Left ventricle myocardium inferior (tissue), 1 donor: ENCODE measurements at regions of chrX and their contacts with region 1.

Region 1: DNA sequence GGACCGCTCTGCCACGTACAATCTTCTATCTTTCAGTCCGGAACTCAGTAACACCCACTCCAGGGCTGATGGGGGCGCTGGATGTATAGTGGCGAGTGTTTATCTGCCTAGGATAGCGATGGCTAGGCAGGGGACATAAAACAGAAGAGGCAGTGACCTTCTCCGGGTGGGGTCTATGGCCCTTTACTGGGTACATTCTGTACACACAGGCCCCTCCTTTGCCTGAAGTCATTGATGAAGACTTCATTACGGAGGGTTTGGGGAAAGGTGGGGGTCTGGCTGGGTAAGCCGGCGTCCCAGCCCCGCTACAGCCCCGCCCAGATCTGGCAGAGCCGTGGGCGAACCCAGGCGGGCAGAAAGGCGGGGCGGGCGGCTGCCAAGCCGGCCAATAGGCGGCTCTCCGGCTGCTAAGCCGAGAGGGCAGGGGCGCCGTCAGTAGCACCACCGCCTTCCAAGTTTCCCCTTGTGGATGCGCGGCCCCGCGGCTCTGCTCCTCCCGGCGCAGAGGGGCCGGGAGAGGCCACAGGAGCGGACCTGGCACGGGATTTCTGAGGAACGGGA is at the start of gene CHST7:
- DNase-seq: peak; percentile 81
- H3K4me3 ChIP-seq: peak within 1 kb of the TSS; percentile 82
- H3K27ac ChIP-seq: peak within 1 kb of the TSS; percentile 93
- H3K4me1 ChIP-seq: peaks cover 25% of the 10 kb centered on the region
- H3K27me3 ChIP-seq: no peaks in the 10 kb centered on the region
- CTCF ChIP-seq: peak; percentile 41
- total RNA-seq, gene CHST7: 15.9 TPM

Region 2: DNA sequence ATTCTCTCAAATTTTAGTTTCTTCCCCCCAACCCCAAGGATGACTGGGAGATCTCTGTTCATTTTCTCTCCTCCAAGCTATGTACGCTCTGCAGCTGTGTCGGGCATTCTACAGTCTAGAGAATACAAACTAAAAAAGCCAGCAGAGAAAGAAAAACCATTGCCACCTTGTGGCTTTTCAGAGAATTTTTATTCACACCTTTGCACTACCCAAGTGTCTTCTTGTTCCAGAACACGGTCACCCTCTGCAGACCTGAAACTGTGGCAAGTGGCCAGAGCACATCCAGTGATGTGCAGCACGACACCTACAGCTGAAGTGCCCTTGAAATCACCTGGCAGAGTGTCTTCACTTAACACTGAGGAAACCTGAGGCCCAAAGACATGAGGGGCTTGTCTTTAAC is 68.7 kb after region 1 on chrX:
- intact Hi-C with region 1: loop called (anchors 10 kb)
- DNase-seq: no peak
- H3K4me3 ChIP-seq: no peak overlapping the region
- H3K27ac ChIP-seq: no peak overlapping the region
- H3K4me1 ChIP-seq: peaks cover 9% of the 10 kb centered on the region
- H3K27me3 ChIP-seq: no peaks in the 10 kb centered on the region
- CTCF ChIP-seq: peak; percentile 64